ENCODE measurements at regions of chr17 and their contacts with region 1.

Region 1: GRCh38 chr17:10357768-10358167 is 15.0 kb downstream of the MYH13 start:
- DNase-seq: peak; percentile 72
- ATAC-seq: peak; percentile 88
- H3K4me3 Mint-ChIP-seq: no peak overlapping the region
- H3K27ac Mint-ChIP-seq: no peak overlapping the region
- H3K4me1 Mint-ChIP-seq: 0 out of 2 replicates have a peak, but pooled peaks cover 2% of the 10 kb centered on the region
- H3K27me3 Mint-ChIP-seq: no peaks in the 10 kb centered on the region
- CTCF ChIP-seq: peak; percentile 58

Region 2: DNA sequence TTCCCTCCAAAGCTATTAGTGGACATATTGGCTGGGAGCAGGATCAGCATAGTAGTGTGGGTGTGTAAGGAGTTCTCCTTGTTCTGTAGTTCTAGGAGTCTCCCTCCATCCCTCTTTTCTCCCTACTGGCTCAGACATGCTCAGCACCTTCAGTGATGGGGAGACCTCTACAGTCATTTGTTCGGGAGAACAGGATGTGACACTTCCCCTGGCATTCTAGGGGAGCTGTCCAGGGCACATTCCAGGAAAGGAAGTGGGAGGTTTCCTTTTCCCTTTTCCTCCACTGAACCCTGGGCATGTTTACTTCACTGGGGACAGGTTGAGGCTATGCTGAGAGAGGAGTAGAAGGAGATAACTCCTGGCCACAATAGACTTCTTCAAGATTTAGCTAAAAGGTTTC is 71.4 kb before region 1 on chr17:
- CTCF ChIA-PET with region 1: no interaction called
- POLR2A ChIA-PET with region 1: no interaction called
- DNase-seq: no peak
- ATAC-seq: peak; percentile 69; the same call in 1 of the 2 replicates
- H3K4me3 Mint-ChIP-seq: no peak overlapping the region
- H3K27ac Mint-ChIP-seq: no peak overlapping the region
- H3K4me1 Mint-ChIP-seq: no peaks in the 10 kb centered on the region
- H3K27me3 Mint-ChIP-seq: no peaks in the 10 kb centered on the region
- CTCF ChIP-seq: no peak

Region 3: DNA sequence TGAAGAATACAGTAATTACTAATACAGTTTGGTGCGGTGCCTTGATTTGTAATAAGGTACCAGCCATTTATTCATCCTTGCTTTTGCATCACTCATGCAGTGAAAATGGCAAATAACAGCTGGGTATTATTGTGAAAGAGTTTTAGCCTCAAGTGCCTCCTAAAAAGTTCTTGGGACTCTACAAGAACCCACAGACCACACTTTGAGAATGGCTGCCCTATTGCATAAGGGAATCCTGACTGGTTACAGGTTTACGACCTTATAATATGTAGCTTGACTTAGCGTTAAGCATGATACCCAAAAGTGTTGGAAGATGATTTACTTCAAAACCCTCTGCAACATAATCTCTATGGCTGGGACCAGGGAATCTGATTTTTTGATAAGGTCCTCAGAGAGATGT is 10.8 kb after region 1 on chr17:
- CTCF ChIA-PET with region 1: interaction called, 11 read pairs
- POLR2A ChIA-PET with region 1: no interaction called
- DNase-seq: no peak
- ATAC-seq: no peak
- H3K4me3 Mint-ChIP-seq: no peak overlapping the region
- H3K27ac Mint-ChIP-seq: no peak overlapping the region
- H3K4me1 Mint-ChIP-seq: peaks cover 8% of the 10 kb centered on the region
- H3K27me3 Mint-ChIP-seq: no peaks in the 10 kb centered on the region
- CTCF ChIP-seq: no peak

Region 4: DNA sequence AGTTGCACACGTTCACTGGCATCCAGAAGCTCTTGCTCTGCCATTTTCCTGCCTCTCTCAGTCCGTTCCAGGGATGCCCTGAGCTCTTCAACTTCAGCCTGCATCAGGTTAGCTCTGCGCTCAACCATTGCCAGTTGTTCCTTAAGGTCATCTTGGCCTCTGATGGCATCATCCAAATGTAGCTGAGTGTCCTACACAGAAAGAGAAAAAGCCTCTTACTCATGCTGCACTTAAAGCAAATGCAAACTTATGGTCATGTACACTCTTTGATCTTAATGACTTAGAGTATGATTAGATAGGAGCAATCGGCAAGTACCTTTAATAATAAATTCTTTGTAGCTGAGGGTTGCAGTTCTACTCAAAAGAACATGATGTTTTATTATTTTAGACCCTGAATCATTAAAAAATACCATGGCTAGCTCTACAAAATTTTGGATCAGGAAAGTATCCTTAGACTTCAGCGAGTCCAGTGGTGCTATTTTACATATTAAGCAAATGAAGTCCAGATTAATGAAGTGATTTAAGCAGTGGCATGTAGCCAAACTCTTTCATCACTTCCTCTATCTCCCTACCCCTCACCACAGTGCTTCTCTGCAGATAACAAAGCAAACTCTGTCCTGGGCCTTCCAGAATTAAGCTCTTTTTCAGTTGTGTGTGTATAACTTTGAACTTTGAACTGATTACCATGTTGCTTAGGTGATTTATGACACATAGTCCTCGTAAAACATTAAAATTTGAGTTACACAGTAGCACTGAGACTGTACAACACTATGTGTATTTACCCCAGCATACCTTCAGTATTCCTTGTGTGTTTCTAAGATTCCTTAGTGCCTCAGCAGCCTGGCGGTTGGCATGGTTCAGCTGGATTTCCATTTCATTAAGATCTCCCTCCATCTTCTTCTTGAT is 89.5 kb after region 1 on chr17:
- CTCF ChIA-PET with region 1: no interaction called
- POLR2A ChIA-PET with region 1: no interaction called
- DNase-seq: no peak
- ATAC-seq: no peak
- H3K4me3 Mint-ChIP-seq: no peak overlapping the region
- H3K27ac Mint-ChIP-seq: no peak overlapping the region
- H3K4me1 Mint-ChIP-seq: no peaks in the 10 kb centered on the region
- H3K27me3 Mint-ChIP-seq: no peaks in the 10 kb centered on the region
- CTCF ChIP-seq: no peak